Heart right ventricle (tissue), 16 donors: ENCODE measurements at regions of chrX and their contacts with region 1.

Region 1: GRCh38 chrX:24150051-24150790 is 692 bp downstream of the ZFX start:
- DNase-seq: peak; percentile 82 to 85
- ATAC-seq: peak; percentile 85 to 95 (median 90)
- H3K4me3 ChIP-seq: peak overlapping the region; percentile 59 to 91 (median 74)
- H3K27ac ChIP-seq: peak overlapping the region; percentile 87 to 100 (median 98)
- H3K4me1 ChIP-seq: peaks cover 2 to 76% (median 57%) of the 10 kb centered on the region in 9 donors
- H3K27me3 ChIP-seq: no peaks in the 10 kb centered on the region
- CTCF ChIP-seq: peak in 8 of 9 donors; percentile 5 to 65 (median 52)

Region 2: GRCh38 chrX:24054182-24055042 is 95.8 kb before region 1 on chrX and contains the start of gene EIF2S3:
- intact Hi-C with region 1: loop called in 2 of 10 experiments (anchors 5 to 10 kb)
- DNase-seq: peak; percentile 80 to 88
- ATAC-seq: peak; percentile 96 to 99 (median 98)
- H3K4me3 ChIP-seq: peak within 1 kb of the TSS in 4 of 10 donors; percentile 77 to 89 (median 84)
- H3K27ac ChIP-seq: peak within 1 kb of the TSS; percentile 83 to 96 (median 92)
- H3K4me1 ChIP-seq: peaks cover 0 to 11% (median 0%) of the 10 kb centered on the region in 9 donors
- H3K27me3 ChIP-seq: peaks cover 0 to 24% (median 0%) of the 10 kb centered on the region in 7 donors
- CTCF ChIP-seq: peak; percentile 35 to 83 (median 74)
- total RNA-seq, gene EIF2S3: 68.7 to 104 (median 80.6) TPM

Region 3: GRCh38 chrX:24186483-24186882 is 36.3 kb after region 1 on chrX:
- intact Hi-C with region 1: loop called in 1 of 10 experiments (anchors 5 kb)
- DNase-seq: no peak
- ATAC-seq: no peak
- H3K4me3 ChIP-seq: no peak overlapping the region
- H3K27ac ChIP-seq: no peak overlapping the region
- H3K4me1 ChIP-seq: peaks cover 0 to 52% (median 6%) of the 10 kb centered on the region in 9 donors
- H3K27me3 ChIP-seq: no peaks in the 10 kb centered on the region
- CTCF ChIP-seq: no peak

Region 4: DNA sequence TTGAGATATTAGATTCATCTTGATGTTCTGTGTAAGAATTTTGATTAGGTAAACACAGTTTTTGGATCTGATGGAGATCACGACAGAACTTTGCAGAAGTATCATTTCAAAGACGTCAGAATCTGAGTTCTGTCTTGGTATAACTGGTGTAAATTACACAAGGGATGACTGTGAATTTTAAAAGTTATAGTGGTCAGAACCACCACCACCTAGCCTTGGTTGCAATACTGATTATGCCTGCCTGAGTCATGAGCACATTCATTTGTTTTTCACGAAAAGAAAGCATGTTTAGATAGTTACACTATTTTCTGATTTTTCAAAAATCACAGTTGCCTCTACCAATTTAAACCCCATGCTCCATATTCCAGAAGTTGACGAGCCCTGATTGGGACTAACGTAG is 54.1 kb after region 1 on chrX:
- intact Hi-C with region 1: loop called in 1 of 10 experiments (anchors 10 kb)
- DNase-seq: no peak
- ATAC-seq: no peak
- H3K4me3 ChIP-seq: no peak overlapping the region
- H3K27ac ChIP-seq: no peak overlapping the region
- H3K4me1 ChIP-seq: peaks cover 0 to 47% (median 24%) of the 10 kb centered on the region in 9 donors
- H3K27me3 ChIP-seq: no peaks in the 10 kb centered on the region
- CTCF ChIP-seq: no peak

Region 5: GRCh38 chrX:24241822-24242648 is 91.8 kb after region 1 on chrX:
- intact Hi-C with region 1: no loop called
- DNase-seq: peak in 1 of 2 donors; percentile 32
- ATAC-seq: peak; percentile 39 to 89 (median 66)
- H3K4me3 ChIP-seq: no peak overlapping the region
- H3K27ac ChIP-seq: peak overlapping the region in 2 of 10 donors; percentile 6 to 47
- H3K4me1 ChIP-seq: peaks cover 0 to 5% (median 0%) of the 10 kb centered on the region in 9 donors
- H3K27me3 ChIP-seq: peaks cover 0 to 60% (median 0%) of the 10 kb centered on the region in 7 donors
- CTCF ChIP-seq: peak in 7 of 9 donors; percentile 32 to 57 (median 48)

Region 6: DNA sequence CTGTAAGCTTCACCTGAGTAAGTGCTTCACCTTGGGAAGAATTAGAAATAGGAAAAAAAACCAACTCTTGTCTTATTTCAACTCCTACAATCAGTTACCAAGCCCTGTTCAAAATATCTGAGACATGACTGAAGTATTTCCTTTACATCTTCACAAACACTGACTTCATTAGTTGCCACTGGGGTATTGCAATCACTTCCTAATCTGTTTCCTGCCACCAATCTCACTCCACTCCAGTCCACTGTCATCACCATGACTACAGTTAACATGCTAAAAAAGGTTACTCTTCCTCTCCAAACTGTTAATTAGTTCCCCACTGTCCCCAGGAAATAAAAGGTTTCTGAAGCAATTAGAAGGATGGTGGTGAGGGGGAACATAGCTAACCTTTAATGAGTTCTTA is 206.9 kb after region 1 on chrX:
- intact Hi-C with region 1: no loop called
- DNase-seq: no peak
- ATAC-seq: peak in 1 of 8 donors; percentile 28
- H3K4me3 ChIP-seq: no peak overlapping the region
- H3K27ac ChIP-seq: no peak overlapping the region
- H3K4me1 ChIP-seq: no peaks in the 10 kb centered on the region
- H3K27me3 ChIP-seq: peaks cover 0 to 42% (median 0%) of the 10 kb centered on the region in 7 donors
- CTCF ChIP-seq: no peak